Ascending aorta (tissue), 2 donors: ENCODE measurements at regions of chr6 and their contacts with region 1.

Region 1: DNA sequence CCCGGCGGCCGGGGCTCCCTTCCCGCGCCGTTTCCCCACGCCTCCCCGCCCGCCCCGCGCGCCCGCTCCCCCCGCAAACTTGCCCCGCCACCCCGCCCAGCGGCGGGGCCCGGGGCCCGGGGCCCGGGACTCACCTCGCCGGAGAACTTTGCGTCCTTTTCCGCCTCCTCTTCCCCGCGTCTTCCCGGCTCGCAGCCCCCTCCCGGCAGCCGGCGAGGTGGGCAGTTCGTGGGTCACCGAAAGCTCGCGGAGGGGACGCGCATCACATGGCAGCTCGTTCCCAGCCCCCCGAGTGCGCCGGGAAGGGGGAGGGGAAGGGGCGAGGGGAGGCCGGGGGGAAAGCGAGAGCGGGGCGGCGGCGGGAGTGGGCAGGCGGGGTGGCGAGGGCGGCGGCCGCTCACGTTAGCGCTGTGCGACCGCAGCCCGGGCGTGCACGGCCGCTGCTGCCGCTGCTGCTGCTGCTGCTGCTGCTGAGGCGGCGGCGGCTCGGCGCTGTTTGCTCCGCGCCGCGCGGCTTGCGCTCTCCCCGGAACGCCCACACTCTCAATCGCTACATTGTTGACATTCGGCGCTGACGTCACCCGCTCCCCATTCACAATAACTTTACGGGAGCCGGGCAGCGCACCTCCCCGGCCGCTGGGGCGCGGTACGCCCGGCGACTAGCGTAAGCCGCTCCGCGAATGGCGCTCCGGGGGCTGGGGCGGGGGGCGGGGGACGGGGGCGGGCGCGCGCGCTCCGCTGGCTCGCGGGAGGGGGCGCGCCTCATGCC is at the start of gene BACH2:
- DNase-seq: peak; percentile 75 to 96
- H3K4me3 ChIP-seq: peak within 1 kb of the TSS; percentile 87 to 94
- H3K27ac ChIP-seq: peak within 1 kb of the TSS; percentile 91 to 95
- H3K4me1 ChIP-seq: peaks cover 2 to 10% of the 10 kb centered on the region in 2 donors
- H3K27me3 ChIP-seq: no peaks in the 10 kb centered on the region
- CTCF ChIP-seq: peak in 1 of 3 experiments; percentile 18
- total RNA-seq, gene BACH2: 7.7 TPM

Region 2: GRCh38 chr6:89940225-89941027 is 356.1 kb before region 1 on chr6:
- intact Hi-C with region 1: loop called (anchors 5 kb)
- DNase-seq: peak in 1 of 2 donors; percentile 78
- H3K4me3 ChIP-seq: no peak overlapping the region
- H3K27ac ChIP-seq: no peak overlapping the region
- H3K4me1 ChIP-seq: peaks cover 0 to 15% of the 10 kb centered on the region in 2 donors
- H3K27me3 ChIP-seq: no peaks in the 10 kb centered on the region
- CTCF ChIP-seq: peak; percentile 54 to 67 (median 59)

Region 3: GRCh38 chr6:90098001-90098531 is 198.5 kb before region 1 on chr6:
- intact Hi-C with region 1: loop called (anchors 1 kb)
- DNase-seq: peak; percentile 63 to 95
- H3K4me3 ChIP-seq: peak overlapping the region in 1 of 2 donors; percentile 9
- H3K27ac ChIP-seq: peak overlapping the region; percentile 89 to 93
- H3K4me1 ChIP-seq: peaks cover 4 to 46% of the 10 kb centered on the region in 2 donors
- H3K27me3 ChIP-seq: no peaks in the 10 kb centered on the region
- CTCF ChIP-seq: peak; percentile 26 to 59 (median 48)

Region 4: DNA sequence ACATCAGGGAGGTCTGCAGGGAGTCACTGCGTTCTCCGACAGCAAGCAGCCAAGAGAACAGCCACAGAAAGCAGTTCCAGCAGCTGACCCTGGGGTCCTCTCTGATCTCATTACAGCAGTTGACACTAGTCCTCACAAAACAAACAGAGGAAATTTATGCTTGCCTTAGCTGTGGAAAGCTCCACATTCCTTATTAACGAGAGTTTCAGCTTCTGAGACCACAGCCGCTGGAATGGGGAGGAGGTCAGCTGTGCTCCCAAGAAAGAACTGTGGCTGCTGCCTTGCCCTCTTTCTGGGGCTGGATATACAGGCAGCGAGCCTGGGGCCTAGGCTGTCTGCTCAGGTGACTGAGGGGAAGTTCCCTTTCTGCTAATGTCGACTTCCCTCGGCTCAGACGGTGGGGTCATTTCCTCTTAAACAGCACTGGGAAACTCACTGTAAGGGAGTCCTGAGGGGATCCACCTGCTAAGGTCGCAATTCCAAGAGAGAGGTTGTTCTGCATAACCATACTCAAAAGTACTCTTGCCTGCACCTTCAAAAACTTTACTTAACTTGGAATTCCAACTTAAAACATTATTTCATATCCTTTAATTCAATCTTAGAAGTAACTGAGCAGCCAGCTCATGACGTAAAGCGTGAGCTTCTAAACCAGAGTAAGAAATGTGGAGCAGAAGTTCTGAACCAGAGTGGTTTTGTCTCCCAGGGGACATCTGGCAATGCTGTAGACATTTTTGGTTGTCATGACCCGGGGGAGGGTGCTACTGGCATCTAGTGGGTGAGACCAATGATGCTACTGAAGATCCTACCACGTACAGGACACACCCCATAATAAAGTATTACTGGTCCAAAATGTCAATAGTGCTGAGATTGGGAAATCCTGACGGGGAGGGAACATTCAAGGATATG is 80.2 kb before region 1 on chr6:
- intact Hi-C with region 1: loop called (anchors 1 kb)
- DNase-seq: no peak
- H3K4me3 ChIP-seq: no peak overlapping the region
- H3K27ac ChIP-seq: peak overlapping the region; percentile 51 to 81
- H3K4me1 ChIP-seq: peaks cover 3 to 28% of the 10 kb centered on the region in 2 donors
- H3K27me3 ChIP-seq: no peaks in the 10 kb centered on the region
- CTCF ChIP-seq: no peak

Region 5: GRCh38 chr6:90393232-90393884 is 96.8 kb after region 1 on chr6:
- intact Hi-C with region 1: loop called (anchors 5 kb)
- DNase-seq: peak in 1 of 2 donors; percentile 78
- H3K4me3 ChIP-seq: no peak overlapping the region
- H3K27ac ChIP-seq: no peak overlapping the region
- H3K4me1 ChIP-seq: no peaks in the 10 kb centered on the region
- H3K27me3 ChIP-seq: no peaks in the 10 kb centered on the region
- CTCF ChIP-seq: peak; percentile 67 to 85 (median 76)

Region 6: GRCh38 chr6:90586836-90587638 is 290.5 kb after region 1 on chr6 and contains the start of gene MAP3K7:
- intact Hi-C with region 1: loop called (anchors 5 kb)
- DNase-seq: peak; percentile 82 to 97
- H3K4me3 ChIP-seq: peak within 1 kb of the TSS; percentile 82 to 93
- H3K27ac ChIP-seq: peak within 1 kb of the TSS; percentile 89 to 93
- H3K4me1 ChIP-seq: peaks cover 4 to 16% of the 10 kb centered on the region in 2 donors
- H3K27me3 ChIP-seq: no peaks in the 10 kb centered on the region
- CTCF ChIP-seq: no peak
- total RNA-seq, gene MAP3K7: 18.3 TPM